CD8-positive, alpha-beta memory T cell (primary cell): ENCODE measurements at regions of chr4 and their contacts with region 1.

Region 1: GRCh38 chr4:88456757-88457306 is at the start of gene HERC5:
- DNase-seq: peak; percentile 88 to 95 (median 93)
- H3K4me3 ChIP-seq: peak within 1 kb of the TSS; percentile 97
- H3K4me3 Mint-ChIP-seq: peak within 1 kb of the TSS; percentile 95 to 100 (median 98)
- H3K27ac ChIP-seq: peak within 1 kb of the TSS; percentile 64
- H3K27ac Mint-ChIP-seq: peak within 1 kb of the TSS; percentile 87 to 100 (median 100)
- H3K4me1 ChIP-seq: peaks cover 16% of the 10 kb centered on the region
- H3K4me1 Mint-ChIP-seq: peaks cover 25 to 61% (median 31%) of the 10 kb centered on the region in 3 donors
- H3K27me3 ChIP-seq: no peaks in the 10 kb centered on the region
- H3K27me3 Mint-ChIP-seq: no peaks in the 10 kb centered on the region
- total RNA-seq, gene HERC5: 7.0 to 8.3 TPM

Region 2: DNA sequence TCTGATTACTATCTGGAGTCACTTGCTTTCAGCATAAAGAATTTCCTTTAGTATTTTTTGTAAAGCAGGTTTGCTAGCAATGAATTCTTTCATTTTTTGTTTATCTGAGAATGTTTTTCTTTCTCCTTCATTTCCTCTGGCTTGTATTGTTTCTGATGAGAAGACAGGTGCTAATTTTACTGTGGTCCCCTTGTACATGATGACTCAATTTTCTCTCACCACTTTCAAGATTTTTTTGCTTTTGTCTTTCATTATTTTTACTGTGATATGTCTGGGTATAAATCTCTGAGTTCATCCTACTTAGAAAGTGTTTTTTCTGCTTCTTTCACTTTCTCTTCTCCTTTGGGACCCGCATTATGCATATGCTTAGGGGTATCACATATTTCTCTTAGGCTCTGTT is 386.8 kb before region 1 on chr4:
- CTCF ChIA-PET with region 1: no interaction called
- POLR2A ChIA-PET with region 1: no interaction called
- DNase-seq: no peak
- H3K4me3 ChIP-seq: no peak overlapping the region
- H3K4me3 Mint-ChIP-seq: no peak overlapping the region
- H3K27ac ChIP-seq: no peak overlapping the region
- H3K27ac Mint-ChIP-seq: peak overlapping the region in 1 of 8 donors; percentile 15
- H3K4me1 ChIP-seq: no peaks in the 10 kb centered on the region
- H3K4me1 Mint-ChIP-seq: no peaks in the 10 kb centered on the region
- H3K27me3 ChIP-seq: no peaks in the 10 kb centered on the region
- H3K27me3 Mint-ChIP-seq: no peaks in the 10 kb centered on the region

Region 3: GRCh38 chr4:88378691-88379559 is 77.9 kb before region 1 on chr4 and contains the start of gene HERC6:
- CTCF ChIA-PET with region 1: interaction called, 18 read pairs
- POLR2A ChIA-PET with region 1: interaction called, 25 read pairs
- DNase-seq: peak; percentile 55 to 84 (median 78)
- H3K4me3 ChIP-seq: peak within 1 kb of the TSS; percentile 94
- H3K4me3 Mint-ChIP-seq: peak within 1 kb of the TSS; percentile 93 to 97 (median 96)
- H3K27ac ChIP-seq: peak within 1 kb of the TSS; percentile 91
- H3K27ac Mint-ChIP-seq: peak within 1 kb of the TSS; percentile 86 to 99 (median 97)
- H3K4me1 ChIP-seq: peaks cover 33% of the 10 kb centered on the region
- H3K4me1 Mint-ChIP-seq: peaks cover 37 to 59% (median 48%) of the 10 kb centered on the region in 3 donors
- H3K27me3 ChIP-seq: no peaks in the 10 kb centered on the region
- H3K27me3 Mint-ChIP-seq: no peaks in the 10 kb centered on the region
- total RNA-seq, gene HERC6: 3.7 to 5.4 TPM

Region 4: GRCh38 chr4:88439161-88439760 is 17.6 kb before region 1 on chr4:
- CTCF ChIA-PET with region 1: interaction called, 11 read pairs
- POLR2A ChIA-PET with region 1: no interaction called
- DNase-seq: no peak
- H3K4me3 ChIP-seq: no peak overlapping the region
- H3K4me3 Mint-ChIP-seq: no peak overlapping the region
- H3K27ac ChIP-seq: no peak overlapping the region
- H3K27ac Mint-ChIP-seq: peak overlapping the region in 7 of 8 donors; percentile 7 to 94 (median 51)
- H3K4me1 ChIP-seq: no peaks in the 10 kb centered on the region
- H3K4me1 Mint-ChIP-seq: peaks cover 0 to 1% (median 0%) of the 10 kb centered on the region in 3 donors
- H3K27me3 ChIP-seq: no peaks in the 10 kb centered on the region
- H3K27me3 Mint-ChIP-seq: no peaks in the 10 kb centered on the region

Region 5: DNA sequence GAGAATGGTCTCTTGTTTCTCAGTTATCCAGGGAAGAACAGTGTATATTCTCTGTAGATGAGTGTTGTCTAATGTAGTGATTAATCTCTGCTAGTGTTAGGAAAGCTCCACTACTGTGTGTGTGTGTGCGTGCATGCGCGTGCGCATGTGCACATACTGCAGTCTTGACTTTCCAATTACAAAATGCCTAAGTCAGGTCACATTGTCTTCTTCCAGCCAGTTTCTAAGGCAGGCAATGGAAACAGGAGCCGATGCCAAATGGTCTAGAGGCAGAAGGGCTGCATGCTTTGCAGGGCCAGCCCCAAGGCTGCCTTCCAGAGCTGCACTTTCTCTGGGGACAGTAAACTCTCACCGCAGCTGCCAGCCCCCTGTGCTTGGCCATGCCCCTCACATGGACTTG is 271.3 kb after region 1 on chr4:
- CTCF ChIA-PET with region 1: no interaction called
- POLR2A ChIA-PET with region 1: no interaction called
- DNase-seq: no peak
- H3K4me3 ChIP-seq: no peak overlapping the region
- H3K4me3 Mint-ChIP-seq: no peak overlapping the region
- H3K27ac ChIP-seq: no peak overlapping the region
- H3K27ac Mint-ChIP-seq: peak overlapping the region in 2 of 8 donors; percentile 27 to 54
- H3K4me1 ChIP-seq: no peaks in the 10 kb centered on the region
- H3K4me1 Mint-ChIP-seq: no peaks in the 10 kb centered on the region
- H3K27me3 ChIP-seq: no peaks in the 10 kb centered on the region
- H3K27me3 Mint-ChIP-seq: no peaks in the 10 kb centered on the region